CD14-positive monocyte (primary cell): ENCODE measurements at regions of chr21 and their contacts with region 1.

Region 1: GRCh38 chr21:42009831-42010523 is at the start of gene ZBTB21:
- DNase-seq: peak; percentile 97
- H3K4me3 ChIP-seq: peak within 1 kb of the TSS; percentile 50 to 81 (median 63)
- H3K4me3 Mint-ChIP-seq: peak within 1 kb of the TSS; percentile 93 to 97
- H3K27ac ChIP-seq: peak within 1 kb of the TSS; percentile 93 to 94
- H3K27ac Mint-ChIP-seq: peak within 1 kb of the TSS; percentile 99 to 100 (median 99)
- H3K4me1 ChIP-seq: peaks cover 10 to 19% of the 10 kb centered on the region in 2 donors
- H3K4me1 Mint-ChIP-seq: peaks cover 19% of the 10 kb centered on the region
- H3K27me3 ChIP-seq: peaks cover 10 to 23% of the 10 kb centered on the region in 2 donors
- H3K27me3 Mint-ChIP-seq: peaks cover 24% of the 10 kb centered on the region in 3 donors
- CTCF ChIP-seq: no peak
- polyA plus RNA-seq, gene ZBTB21: 4.7 to 7.2 (median 6.3) TPM

Region 2: GRCh38 chr21:41933313-41934086 is 76.5 kb before region 1 on chr21:
- intact Hi-C with region 1: loop called in 1 of 2 experiments (anchors 10 kb)
- DNase-seq: no peak
- H3K4me3 ChIP-seq: peak overlapping the region in 1 of 3 experiments; percentile 49
- H3K4me3 Mint-ChIP-seq: peak overlapping the region; percentile 66 to 77
- H3K27ac ChIP-seq: peak overlapping the region in 1 of 2 donors; percentile 18
- H3K27ac Mint-ChIP-seq: peak overlapping the region; percentile 6 to 82 (median 65)
- H3K4me1 ChIP-seq: peaks cover 38% of the 10 kb centered on the region in 2 donors
- H3K4me1 Mint-ChIP-seq: peaks cover 45% of the 10 kb centered on the region
- H3K27me3 ChIP-seq: no peaks in the 10 kb centered on the region
- H3K27me3 Mint-ChIP-seq: peaks cover 7 to 12% (median 8%) of the 10 kb centered on the region in 3 donors
- CTCF ChIP-seq: no peak

Region 3: DNA sequence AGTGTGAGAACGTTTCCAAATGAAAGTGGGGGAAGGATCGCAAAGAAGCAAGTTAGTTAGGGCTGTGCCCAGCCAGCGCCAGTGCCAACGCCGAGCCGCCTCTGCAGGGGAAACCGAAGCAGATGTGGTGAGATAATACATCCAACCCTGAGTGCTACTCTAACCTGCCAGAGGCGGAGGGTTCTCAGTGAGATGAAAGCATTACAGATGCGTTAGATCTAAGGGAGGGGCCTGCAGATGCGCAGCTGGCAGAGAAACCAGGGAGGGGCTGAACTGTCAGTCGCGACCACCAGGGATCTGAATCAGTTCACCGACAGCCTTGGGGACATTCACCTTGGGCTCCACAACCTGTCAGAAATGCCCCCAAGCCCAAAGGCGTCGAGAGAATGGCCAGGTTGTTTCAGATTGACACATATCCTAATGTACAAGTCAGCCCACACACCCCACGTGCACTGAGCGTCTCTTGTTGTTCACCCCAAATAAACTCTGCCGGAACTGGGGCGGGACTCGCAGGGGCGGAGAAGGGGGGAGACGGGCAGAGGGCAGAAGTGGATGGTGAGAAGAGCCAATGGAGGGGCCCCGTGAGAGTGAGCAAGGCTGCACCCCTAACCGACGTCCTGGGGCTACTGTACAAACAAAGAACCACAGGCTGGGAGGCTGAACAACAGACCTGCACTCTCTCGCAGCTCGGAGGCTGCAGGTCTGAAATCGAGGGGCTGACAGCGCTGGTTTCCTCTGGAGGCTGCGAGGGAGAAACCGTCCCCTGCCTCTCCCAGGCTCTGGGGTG is 52.5 kb after region 1 on chr21:
- intact Hi-C with region 1: loop called (anchors 2 to 5 kb)
- DNase-seq: peak; percentile 55 to 72 (median 64)
- H3K4me3 ChIP-seq: peak overlapping the region in 2 of 3 experiments; percentile 19 to 72
- H3K4me3 Mint-ChIP-seq: peak overlapping the region; percentile 61 to 85
- H3K27ac ChIP-seq: peak overlapping the region; percentile 90 to 95
- H3K27ac Mint-ChIP-seq: peak overlapping the region; percentile 93 to 97 (median 94)
- H3K4me1 ChIP-seq: peaks cover 67 to 73% of the 10 kb centered on the region in 2 donors
- H3K4me1 Mint-ChIP-seq: peaks cover 74% of the 10 kb centered on the region
- H3K27me3 ChIP-seq: no peaks in the 10 kb centered on the region
- H3K27me3 Mint-ChIP-seq: peaks cover 0 to 4% (median 2%) of the 10 kb centered on the region in 3 donors
- CTCF ChIP-seq: no peak

Region 4: DNA sequence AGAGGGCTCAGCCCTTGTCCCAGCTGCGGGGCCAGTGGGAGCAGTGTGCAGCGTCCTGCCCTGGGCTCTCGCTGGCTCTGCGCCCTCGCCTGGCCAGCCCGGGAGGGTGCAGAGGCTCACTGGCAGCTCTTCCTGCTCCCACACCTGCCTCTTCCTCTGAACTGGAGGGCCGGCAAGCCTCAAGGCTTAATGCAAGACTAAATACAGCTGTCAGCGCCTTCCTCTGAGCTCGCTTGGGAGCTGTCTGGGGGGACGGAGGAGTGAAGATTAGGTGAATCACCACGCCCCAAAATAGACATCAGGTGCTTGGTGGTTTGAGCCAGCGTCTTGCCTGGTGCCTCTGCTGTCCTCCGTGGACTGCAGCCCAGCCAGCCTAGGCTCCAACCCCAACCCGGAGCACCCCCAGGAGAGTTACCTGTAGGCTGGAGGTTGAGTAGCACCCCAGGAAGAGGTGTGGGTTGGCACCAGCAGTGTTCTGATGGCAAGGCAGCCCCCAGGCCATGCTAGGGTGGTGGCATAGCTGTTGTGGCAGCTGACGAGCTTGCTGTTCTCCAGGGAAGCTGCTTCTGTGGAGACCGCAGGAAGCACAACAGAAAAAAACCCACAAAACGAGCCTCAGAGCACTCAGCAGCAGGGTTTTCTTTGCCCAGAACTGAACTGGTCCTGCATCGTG is 98.0 kb after region 1 on chr21:
- intact Hi-C with region 1: loop called in 1 of 2 experiments (anchors 5 kb)
- DNase-seq: peak; percentile 37 to 70 (median 65)
- H3K4me3 ChIP-seq: peak overlapping the region in 2 of 3 experiments; percentile 1 to 9
- H3K4me3 Mint-ChIP-seq: peak overlapping the region; percentile 43 to 78
- H3K27ac ChIP-seq: no peak overlapping the region
- H3K27ac Mint-ChIP-seq: peak overlapping the region in 1 of 7 donors; percentile 14
- H3K4me1 ChIP-seq: peaks cover 10 to 13% of the 10 kb centered on the region in 2 donors
- H3K4me1 Mint-ChIP-seq: peaks cover 8% of the 10 kb centered on the region
- H3K27me3 ChIP-seq: no peaks in the 10 kb centered on the region
- H3K27me3 Mint-ChIP-seq: peaks cover 8 to 21% (median 18%) of the 10 kb centered on the region in 3 donors
- CTCF ChIP-seq: peak; percentile 85

Region 5: DNA sequence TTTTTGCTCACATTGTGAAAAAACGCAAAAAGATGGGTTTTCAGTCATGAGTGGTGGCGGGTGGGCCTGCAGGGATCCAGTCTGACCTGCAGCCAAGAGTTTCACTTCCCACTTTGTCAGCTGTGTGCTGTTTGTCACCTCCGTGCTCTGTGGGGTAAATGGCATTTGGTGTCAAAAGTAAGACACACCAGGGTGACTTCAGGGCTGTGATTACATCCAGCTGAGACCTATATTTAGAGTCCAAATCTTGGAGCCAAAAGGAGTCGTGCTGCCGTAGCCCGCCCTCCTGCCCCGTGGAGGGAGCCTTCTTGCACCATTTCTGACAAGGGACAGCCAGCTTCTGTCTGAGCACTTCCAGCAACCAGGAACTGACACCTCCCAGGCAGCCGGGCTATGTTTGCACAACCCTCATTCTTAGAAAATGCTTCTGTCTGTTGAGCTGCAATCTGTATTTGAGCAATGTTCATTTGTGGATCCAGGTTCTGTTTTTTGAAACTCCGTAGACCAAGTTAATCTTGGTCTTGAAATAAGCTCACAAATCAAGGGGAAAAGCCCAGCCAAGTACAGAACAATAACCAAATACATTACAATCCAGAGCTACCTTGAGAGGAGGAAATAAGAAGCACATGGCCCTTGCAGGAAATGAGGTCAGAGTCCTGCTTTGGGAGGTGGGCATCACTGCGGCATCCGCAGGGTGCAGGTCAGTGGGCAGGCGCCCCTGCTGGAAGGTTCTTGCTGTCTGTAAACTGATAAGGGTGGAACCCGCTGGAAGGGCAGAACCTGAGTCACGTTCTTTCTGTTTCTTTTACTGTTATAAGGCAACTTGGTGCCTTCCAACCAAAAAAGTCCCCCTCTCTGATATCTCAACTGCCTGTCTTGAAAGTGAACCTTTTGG is 223.3 kb after region 1 on chr21:
- intact Hi-C with region 1: loop called in 1 of 2 experiments (anchors 10 kb)
- DNase-seq: peak; percentile 91 to 92 (median 92)
- H3K4me3 ChIP-seq: peak overlapping the region in 1 of 3 experiments; percentile 74
- H3K4me3 Mint-ChIP-seq: peak overlapping the region; percentile 64 to 81
- H3K27ac ChIP-seq: peak overlapping the region; percentile 92 to 94
- H3K27ac Mint-ChIP-seq: peak overlapping the region; percentile 95 to 98 (median 97)
- H3K4me1 ChIP-seq: peaks cover 69 to 82% of the 10 kb centered on the region in 2 donors
- H3K4me1 Mint-ChIP-seq: peaks cover 86% of the 10 kb centered on the region
- H3K27me3 ChIP-seq: no peaks in the 10 kb centered on the region
- H3K27me3 Mint-ChIP-seq: peaks cover 1 to 10% (median 6%) of the 10 kb centered on the region in 3 donors
- CTCF ChIP-seq: peak; percentile 58